ENCODE measurements at regions of chr13 and their contacts with region 1.

Region 1: DNA sequence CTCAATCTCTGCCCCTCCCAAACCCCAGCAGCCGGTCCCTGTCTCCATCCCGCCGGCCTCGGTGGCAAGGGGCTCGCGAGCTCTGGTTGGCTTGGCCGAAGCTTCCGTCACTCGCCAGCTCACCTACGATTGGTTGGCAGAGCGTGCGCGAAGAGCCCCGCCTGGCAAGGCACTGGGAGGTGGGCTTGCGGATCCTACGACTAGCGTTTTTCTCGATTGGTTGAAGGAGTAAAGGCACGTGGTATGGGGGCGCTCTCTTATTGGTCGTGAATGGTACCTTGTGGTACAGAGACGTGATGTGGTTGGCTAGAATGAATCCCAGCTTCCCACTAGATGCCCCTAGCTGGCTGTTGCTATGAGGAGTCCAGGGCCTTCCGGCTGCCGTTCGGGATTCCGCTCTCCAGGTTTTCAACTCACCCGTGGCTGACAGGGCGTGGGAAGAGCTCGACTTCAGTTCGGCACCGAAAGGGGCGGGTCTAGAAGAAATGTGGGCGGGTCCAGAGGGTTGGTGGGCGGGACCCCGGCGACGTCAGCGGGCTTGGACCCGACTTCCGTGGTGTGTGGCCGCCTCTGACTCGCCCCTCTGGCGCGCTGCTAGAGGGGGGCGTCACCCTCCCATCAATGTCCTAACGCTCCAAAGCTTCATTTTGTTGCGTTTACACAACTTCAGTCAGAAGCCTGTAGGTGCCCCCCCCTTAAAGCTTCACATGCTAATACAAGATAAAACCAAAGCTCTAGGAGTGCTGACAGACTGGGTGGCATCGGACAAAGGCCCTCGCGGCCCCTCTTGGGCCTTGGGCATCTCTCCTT is 847 bp upstream of the RAP2A start:
- DNase-seq: peak; percentile 99
- H3K4me3 ChIP-seq: peak overlapping the region; percentile 81
- H3K27ac ChIP-seq: peak overlapping the region; percentile 98
- H3K4me1 ChIP-seq: peaks cover 29% of the 10 kb centered on the region
- H3K27me3 ChIP-seq: no peaks in the 10 kb centered on the region
- CTCF ChIP-seq: no peak

Region 2: DNA sequence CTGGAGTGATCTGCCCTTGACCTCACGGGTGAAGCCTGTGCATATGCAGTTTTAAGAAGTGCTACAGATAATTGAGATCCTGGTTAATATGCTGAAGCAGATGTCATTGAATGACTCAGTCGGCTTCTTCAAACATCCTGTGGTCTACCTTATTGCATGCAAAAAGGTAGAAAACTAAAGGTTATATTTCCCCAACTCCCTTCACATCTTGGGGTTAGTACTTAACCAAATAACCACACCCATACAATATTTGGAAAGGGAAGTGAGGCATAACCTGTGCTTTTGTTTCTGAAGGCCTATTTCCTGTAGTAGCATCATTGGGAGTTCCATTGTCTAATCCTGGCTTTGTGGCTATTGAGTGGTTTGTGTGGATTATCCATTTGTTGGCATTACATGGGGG is 59.1 kb after region 1 on chr13:
- CTCF ChIA-PET with region 1: no interaction called
- POLR2A ChIA-PET with region 1: no interaction called
- intact Hi-C with region 1: no loop called
- DNase-seq: no peak
- H3K4me3 ChIP-seq: no peak overlapping the region
- H3K27ac ChIP-seq: no peak overlapping the region
- H3K4me1 ChIP-seq: no peaks in the 10 kb centered on the region
- H3K27me3 ChIP-seq: no peaks in the 10 kb centered on the region
- CTCF ChIP-seq: no peak

Region 3: GRCh38 chr13:97802213-97802612 is 369.1 kb after region 1 on chr13:
- CTCF ChIA-PET with region 1: no interaction called
- POLR2A ChIA-PET with region 1: no interaction called
- intact Hi-C with region 1: loop called (anchors 5 kb)
- DNase-seq: no peak
- H3K4me3 ChIP-seq: no peak overlapping the region
- H3K27ac ChIP-seq: no peak overlapping the region
- H3K4me1 ChIP-seq: no peaks in the 10 kb centered on the region
- H3K27me3 ChIP-seq: no peaks in the 10 kb centered on the region
- CTCF ChIP-seq: no peak

Region 4: GRCh38 chr13:97946951-97947588 is 513.9 kb after region 1 on chr13:
- CTCF ChIA-PET with region 1: no interaction called
- POLR2A ChIA-PET with region 1: no interaction called
- intact Hi-C with region 1: loop called (anchors 10 kb)
- DNase-seq: peak; percentile 96
- H3K4me3 ChIP-seq: no peak overlapping the region
- H3K27ac ChIP-seq: peak overlapping the region; percentile 99
- H3K4me1 ChIP-seq: peaks cover 58% of the 10 kb centered on the region
- H3K27me3 ChIP-seq: no peaks in the 10 kb centered on the region
- CTCF ChIP-seq: no peak